Calu3 (cell line): ENCODE measurements at regions of chr7 and their contacts with region 1.

Region 1: DNA sequence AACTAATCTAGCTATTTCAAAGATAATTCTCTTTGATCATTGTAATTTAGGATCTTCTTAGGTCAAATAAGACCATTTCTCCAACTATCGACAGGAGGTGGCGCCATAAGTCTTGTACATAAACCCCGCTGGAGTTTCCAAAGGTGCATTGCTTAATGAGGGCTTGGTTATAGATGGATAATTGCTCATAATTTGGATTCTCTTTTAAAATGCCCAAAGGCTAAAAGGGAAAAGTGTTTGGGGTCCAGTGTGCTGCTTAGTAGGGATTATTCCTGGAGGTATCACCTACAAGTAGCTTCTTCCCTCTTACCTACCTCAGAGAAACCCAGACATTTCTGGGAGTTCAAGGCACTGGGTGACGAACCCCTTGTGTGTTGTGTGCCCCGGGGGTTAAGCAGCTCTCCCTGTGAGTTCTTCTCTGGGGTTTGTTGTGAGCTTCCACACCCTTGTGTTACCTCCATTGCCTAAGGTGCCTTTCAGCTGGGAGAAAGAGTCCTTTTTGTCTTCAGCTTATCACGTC is 75.2 kb downstream of the PAXIP1 start:
- DNase-seq: peak; percentile 76
- H3K4me3 Mint-ChIP-seq: peak overlapping the region; percentile 98
- H3K27ac Mint-ChIP-seq: peak overlapping the region; percentile 94
- H3K4me1 Mint-ChIP-seq: no peaks in the 10 kb centered on the region
- H3K27me3 Mint-ChIP-seq: no peaks in the 10 kb centered on the region
- CTCF ChIP-seq: peak; percentile 44

Region 2: GRCh38 chr7:154781369-154782303 is 146.0 kb before region 1 on chr7:
- CTCF ChIA-PET with region 1: no interaction called
- intact Hi-C with region 1: no loop called
- DNase-seq: no peak
- H3K4me3 Mint-ChIP-seq: no peak overlapping the region
- H3K27ac Mint-ChIP-seq: no peak overlapping the region
- H3K4me1 Mint-ChIP-seq: no peaks in the 10 kb centered on the region
- H3K27me3 Mint-ChIP-seq: no peaks in the 10 kb centered on the region
- CTCF ChIP-seq: no peak

Region 3: GRCh38 chr7:154953006-154953684 is 25.5 kb after region 1 on chr7:
- CTCF ChIA-PET with region 1: interaction called, 3 read pairs
- intact Hi-C with region 1: loop called (anchors 2 kb)
- DNase-seq: peak; percentile 55
- H3K4me3 Mint-ChIP-seq: no peak overlapping the region
- H3K27ac Mint-ChIP-seq: no peak overlapping the region
- H3K4me1 Mint-ChIP-seq: no peaks in the 10 kb centered on the region
- H3K27me3 Mint-ChIP-seq: no peaks in the 10 kb centered on the region
- CTCF ChIP-seq: peak; percentile 55

Region 4: DNA sequence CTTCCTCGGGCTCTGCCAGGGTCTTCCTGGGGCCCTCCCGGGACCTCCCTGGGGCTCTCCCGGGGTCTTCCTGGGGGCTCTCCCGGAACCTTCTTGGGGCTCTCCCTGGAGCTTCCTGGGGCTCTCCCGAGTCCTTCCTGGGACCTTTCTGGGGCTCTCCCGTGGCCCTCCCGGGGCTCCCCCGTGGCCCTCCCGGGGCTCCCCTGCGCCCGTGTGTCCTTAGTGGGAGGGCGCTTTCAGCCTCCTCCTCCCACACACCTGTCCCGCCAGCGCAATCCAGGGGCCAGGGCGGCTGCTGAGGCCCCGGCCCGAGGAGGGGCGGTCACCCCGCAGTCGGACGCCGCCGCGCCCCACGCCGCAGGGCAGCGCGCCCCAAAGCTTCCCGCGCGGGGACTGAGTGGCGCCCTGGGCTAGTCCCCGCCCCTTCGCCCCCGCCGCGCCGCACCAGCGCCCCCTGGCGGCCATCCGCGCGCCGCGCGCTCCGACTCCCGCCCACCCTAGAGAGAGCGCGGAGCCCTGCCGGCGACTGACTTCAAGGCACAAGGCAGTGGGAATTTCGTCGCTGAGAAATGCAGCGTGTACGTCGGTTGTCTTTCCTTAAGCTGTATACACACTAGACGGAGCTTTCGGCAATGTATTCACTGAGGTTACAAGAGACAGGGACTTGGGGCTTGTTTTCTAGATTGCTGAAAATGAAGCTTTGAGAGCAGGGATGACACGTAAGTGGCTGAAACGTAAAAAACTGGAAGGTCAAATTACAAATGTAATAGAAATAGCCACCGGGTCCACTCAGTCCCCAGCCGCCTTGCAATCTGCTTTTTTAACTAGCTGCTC is 417.1 kb after region 1 on chr7:
- CTCF ChIA-PET with region 1: interaction called, 5 read pairs
- intact Hi-C with region 1: loop called (anchors 1 kb)
- DNase-seq: peak; percentile 86
- H3K4me3 Mint-ChIP-seq: peak overlapping the region; percentile 43
- H3K27ac Mint-ChIP-seq: no peak overlapping the region
- H3K4me1 Mint-ChIP-seq: no peaks in the 10 kb centered on the region
- H3K27me3 Mint-ChIP-seq: peaks cover 39% of the 10 kb centered on the region
- CTCF ChIP-seq: peak; percentile 92

Region 5: DNA sequence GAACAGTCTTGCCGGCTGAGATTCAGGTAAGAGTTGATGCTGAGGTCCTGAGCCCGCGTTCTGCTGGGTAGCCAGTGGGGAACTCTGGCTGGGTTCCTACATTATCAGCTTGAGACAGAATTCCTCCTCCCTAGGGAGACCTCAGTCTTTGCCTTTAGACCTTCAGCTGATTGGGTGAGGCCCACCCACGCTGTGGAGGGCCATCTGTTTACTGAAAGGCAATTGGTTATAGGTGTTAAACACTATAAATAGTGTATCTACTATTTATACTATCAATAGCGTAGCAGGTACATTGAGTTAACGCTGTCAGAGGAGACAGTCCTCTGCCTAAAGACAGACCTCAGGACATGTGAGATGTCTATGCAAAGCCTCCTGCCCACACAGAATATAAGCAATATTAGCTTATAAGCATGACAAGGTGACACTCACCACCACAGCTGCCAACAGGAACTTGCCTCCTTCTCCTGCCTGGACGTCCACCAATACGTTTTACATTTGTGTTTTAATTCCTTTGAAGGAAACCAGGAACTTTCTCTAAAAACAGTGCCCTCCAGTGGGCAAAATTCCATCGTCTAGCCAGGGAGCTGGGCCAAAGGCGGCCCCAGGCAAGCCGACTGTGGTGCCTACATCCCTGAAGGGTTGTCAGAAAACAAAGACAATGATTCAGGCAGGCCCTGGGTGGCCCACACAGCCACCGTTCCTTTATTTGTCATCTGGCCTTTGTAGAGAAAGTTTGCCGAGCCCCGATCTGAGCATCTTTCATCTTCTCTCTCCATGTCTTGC is 428.8 kb after region 1 on chr7:
- CTCF ChIA-PET with region 1: interaction called, 17 read pairs
- intact Hi-C with region 1: loop called (anchors 1 kb)
- DNase-seq: peak; percentile 66
- H3K4me3 Mint-ChIP-seq: no peak overlapping the region
- H3K27ac Mint-ChIP-seq: no peak overlapping the region
- H3K4me1 Mint-ChIP-seq: no peaks in the 10 kb centered on the region
- H3K27me3 Mint-ChIP-seq: peaks cover 89% of the 10 kb centered on the region
- CTCF ChIP-seq: peak; percentile 15

Region 6: GRCh38 chr7:155524018-155524616 is 596.4 kb after region 1 on chr7:
- CTCF ChIA-PET with region 1: no interaction called
- intact Hi-C with region 1: loop called (anchors 5 kb)
- DNase-seq: peak; percentile 17
- H3K4me3 Mint-ChIP-seq: no peak overlapping the region
- H3K27ac Mint-ChIP-seq: no peak overlapping the region
- H3K4me1 Mint-ChIP-seq: no peaks in the 10 kb centered on the region
- H3K27me3 Mint-ChIP-seq: peaks cover 93% of the 10 kb centered on the region
- CTCF ChIP-seq: no peak

Region 7: DNA sequence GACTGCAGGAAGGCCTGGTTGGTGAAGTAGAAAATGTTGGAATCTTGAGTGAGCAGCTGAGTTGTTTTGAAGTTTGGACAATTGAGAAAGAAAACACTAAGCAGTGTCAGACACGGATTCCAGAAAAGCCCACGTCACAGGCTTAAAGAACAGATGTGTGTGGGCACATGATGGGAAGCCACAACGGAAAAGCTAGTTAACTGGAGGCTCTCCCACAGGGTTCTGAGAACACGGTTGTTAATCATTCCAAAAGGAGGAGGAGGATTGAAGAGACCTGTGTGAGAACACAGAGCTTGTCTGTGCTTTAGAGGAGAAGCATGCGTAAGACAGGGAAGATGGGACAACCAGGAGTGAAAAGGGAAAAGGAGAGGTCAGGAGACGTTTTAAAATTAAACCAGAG is 842.0 kb after region 1 on chr7:
- CTCF ChIA-PET with region 1: no interaction called
- intact Hi-C with region 1: loop called (anchors 2 kb)
- DNase-seq: no peak
- H3K4me3 Mint-ChIP-seq: no peak overlapping the region
- H3K27ac Mint-ChIP-seq: no peak overlapping the region
- H3K4me1 Mint-ChIP-seq: no peaks in the 10 kb centered on the region
- H3K27me3 Mint-ChIP-seq: no peaks in the 10 kb centered on the region
- CTCF ChIP-seq: no peak